ENCODE measurements at regions of chr9 and their contacts with region 1.

Region 1: GRCh38 chr9:27333241-27334052 is 36.5 kb upstream of the EQTN start:
- DNase-seq: peak; percentile 19
- H3K4me3 ChIP-seq: no peak overlapping the region
- CTCF ChIP-seq: peak; percentile 61

Region 2: DNA sequence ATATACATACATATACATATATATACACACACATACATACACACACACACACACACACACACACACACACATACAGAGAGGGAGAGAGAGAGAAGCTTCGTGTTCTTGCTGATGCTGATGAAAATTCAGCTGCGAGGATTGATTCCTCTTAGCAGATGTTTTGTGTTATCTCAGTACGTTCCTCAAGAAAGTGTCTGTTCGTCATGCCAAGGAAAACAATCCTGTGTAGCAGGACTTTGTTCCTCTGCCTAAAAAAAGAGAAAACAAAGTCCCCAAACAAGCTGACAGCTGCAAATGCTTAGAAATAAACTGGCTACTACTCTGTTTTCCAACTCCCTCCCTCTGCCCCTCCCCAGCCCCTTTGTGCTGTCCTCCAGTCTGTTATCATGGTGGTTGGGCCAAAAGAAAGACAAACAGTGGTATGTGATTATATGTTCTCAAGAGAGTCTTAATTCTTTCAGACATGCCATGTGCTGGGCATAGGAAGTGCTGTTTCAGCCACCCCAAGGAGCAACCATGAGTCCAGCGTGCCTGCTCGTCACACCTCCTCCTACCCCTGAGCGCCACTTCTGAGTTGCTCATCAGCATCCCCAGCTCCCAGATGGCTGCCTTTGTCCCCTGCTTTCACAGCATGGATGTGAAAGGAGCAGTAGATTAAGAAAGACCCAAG is 35.0 kb after region 1 on chr9:
- CTCF ChIA-PET with region 1: no interaction called
- POLR2A ChIA-PET with region 1: no interaction called
- DNase-seq: no peak
- H3K4me3 ChIP-seq: no peak overlapping the region
- CTCF ChIP-seq: no peak

Region 3: GRCh38 chr9:27524236-27524635 is 190.8 kb after region 1 on chr9 and contains the start of gene IFNK:
- CTCF ChIA-PET with region 1: interaction called, 89 read pairs
- POLR2A ChIA-PET with region 1: no interaction called
- DNase-seq: no peak
- H3K4me3 ChIP-seq: no peak within 1 kb of the TSS
- CTCF ChIP-seq: no peak

Region 4: DNA sequence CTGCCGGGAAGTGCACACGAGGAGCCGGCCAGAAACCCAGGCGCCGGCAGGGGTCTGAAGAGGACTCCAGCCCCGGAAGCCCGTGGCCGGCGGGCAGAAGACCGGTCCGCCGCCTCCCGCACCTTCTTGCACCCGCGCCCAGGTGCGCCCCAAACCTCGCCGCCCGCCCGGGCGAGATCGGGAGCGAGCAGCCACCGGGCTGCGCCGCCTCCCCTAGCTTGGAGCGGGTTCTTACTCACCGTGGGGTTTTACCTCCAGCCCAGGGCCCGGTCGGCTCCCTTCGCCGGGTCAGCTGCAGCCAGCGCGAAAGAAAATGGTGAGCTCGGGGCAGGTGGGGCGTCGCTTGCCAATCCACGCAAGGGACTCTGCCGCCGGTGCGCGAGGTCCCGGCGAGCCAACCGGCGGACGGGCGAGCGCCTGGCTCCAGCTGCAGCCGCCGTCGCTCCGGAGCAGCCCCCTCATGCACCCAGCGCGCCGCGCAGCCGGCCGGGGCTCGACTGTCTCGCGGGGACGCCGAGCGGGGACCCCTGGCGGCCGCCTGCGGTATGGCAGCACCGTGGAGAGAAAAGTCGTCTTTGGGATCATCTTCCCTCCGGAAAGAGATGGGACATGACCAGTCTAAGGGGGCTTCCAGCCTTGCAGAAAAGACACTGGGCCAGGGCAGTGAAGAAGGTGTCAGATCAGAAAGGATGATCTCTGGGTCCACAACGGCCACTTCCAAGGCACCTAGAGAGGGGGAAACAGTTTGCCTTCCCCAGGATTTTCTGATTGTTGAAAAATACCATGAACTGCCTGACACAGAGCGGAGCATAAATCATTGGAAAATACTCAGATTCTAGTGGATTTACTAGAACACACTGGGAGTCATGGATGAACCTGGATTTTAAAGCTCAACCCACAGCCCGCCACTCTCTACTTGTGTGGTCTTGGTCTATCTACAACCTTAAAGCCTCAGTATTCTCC is 196.2 kb after region 1 on chr9 and contains the start of gene MOB3B:
- CTCF ChIA-PET with region 1: interaction called, 89 read pairs
- POLR2A ChIA-PET with region 1: no interaction called
- DNase-seq: no peak
- H3K4me3 ChIP-seq: peak within 1 kb of the TSS; percentile 56
- CTCF ChIP-seq: peak; percentile 85

Region 5: DNA sequence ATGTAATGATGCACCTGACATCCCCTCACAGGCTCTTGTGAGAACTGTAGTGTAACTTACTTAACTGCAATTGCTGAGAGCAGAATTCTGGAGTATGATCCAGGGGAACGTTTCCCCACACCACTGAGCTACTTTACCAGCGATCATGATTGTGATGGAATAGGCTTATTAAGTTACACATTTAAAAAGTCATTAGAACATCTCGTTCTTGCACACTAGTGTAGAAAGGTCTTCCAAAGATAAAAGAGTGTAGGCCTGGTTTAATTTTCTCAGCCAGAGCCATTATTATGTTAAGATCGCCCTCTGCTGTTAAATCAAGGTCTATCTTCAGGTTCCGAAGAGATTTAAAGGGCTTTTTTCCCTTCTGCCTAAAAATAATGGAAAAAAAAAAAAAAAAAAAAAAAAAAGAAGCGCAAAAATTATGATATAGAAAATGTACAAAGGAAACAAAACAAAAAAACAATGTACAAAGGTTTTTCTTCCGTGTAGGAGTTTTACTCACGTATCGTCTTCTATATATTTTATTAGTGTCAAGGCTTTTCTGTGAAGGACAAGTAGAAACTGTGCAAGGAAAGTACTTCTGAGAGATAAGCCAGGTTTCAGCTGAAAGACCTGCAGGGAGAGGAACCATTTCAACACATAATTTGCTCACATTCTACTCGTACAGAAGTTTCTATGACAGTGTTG is 214.8 kb after region 1 on chr9:
- CTCF ChIA-PET with region 1: interaction called, 140 read pairs
- POLR2A ChIA-PET with region 1: no interaction called
- DNase-seq: no peak
- H3K4me3 ChIP-seq: no peak overlapping the region
- CTCF ChIP-seq: peak; percentile 7

Region 6: DNA sequence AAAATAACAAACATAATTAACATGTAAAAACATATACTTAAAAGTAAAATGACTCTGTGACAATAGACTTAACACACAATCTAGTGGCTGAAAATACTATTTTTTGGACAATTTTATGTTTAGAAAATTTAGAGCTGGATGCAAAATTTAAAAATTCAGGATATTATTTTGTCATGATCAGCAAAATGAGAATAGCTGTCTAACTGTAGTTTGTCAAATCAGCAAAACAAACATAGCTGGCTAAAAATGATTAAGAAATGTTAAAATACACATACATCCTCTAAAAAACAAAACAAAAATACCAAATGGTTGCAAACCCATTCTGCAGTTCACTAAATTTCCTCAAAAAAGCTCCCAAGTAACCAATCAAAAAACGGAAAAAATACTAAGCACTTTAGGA is 221.3 kb after region 1 on chr9:
- CTCF ChIA-PET with region 1: interaction called, 140 read pairs
- POLR2A ChIA-PET with region 1: no interaction called
- DNase-seq: no peak
- H3K4me3 ChIP-seq: no peak overlapping the region
- CTCF ChIP-seq: no peak

Region 7: DNA sequence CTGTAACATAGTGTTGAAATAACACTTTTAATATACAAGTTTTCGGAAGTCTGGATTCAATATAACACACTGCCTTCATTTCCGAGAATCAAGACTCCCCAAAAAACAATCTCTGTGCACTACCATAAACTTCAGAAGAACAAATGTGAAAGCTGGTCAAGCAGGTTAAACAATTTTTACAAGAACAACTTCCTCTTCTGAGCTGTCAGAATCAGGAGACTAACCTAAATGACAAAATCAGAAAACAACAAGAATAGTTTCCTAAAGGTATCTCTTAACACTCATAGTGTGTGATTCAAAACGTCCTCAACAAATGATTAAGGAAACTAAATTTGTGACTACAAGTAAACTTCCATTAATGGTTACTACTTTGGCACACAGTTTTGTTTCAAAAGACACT is 228.2 kb after region 1 on chr9:
- CTCF ChIA-PET with region 1: interaction called, 12 read pairs
- POLR2A ChIA-PET with region 1: no interaction called
- DNase-seq: no peak
- H3K4me3 ChIP-seq: no peak overlapping the region
- CTCF ChIP-seq: no peak